ENCODE measurements at regions of chr6 and their contacts with region 1.

Region 1: DNA sequence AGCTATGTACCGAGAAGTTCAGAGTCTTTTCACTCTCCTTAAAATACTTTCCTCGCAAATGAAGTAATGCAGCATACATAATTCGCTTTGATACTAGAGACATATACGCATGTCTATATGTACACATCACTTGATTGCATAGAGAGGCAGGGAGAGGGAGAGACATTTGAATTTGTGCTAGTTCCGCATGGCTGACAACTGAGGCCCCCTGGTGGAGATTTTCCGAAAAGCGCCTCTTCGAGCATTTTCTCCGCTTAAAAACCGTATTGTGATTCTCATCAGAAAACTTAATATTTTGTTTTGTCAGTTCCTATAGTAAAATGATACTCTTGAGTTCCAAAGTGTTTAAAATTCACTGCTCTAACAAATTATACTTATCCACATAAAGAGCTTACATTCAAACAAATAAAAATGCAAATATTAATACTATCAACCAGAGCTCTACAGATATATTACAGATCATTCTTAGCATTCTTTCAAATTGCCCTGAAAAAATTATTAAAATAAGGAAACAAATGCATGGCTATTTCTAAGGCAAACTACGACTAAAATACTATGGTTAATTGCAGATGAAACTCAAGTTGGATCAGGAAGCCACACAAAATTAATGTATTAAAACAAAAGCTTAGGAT is 637 bp downstream of the MYLK4 start:
- DNase-seq: peak; percentile 72
- H3K4me3 Mint-ChIP-seq: no peak overlapping the region
- H3K27ac Mint-ChIP-seq: no peak overlapping the region
- H3K4me1 Mint-ChIP-seq: peaks cover 8% of the 10 kb centered on the region
- H3K27me3 Mint-ChIP-seq: peaks cover 41% of the 10 kb centered on the region

Region 2: GRCh38 chr6:1596088-1596852 is 1153.8 kb before region 1 on chr6:
- CTCF ChIA-PET with region 1: interaction called, 13 read pairs
- POLR2A ChIA-PET with region 1: no interaction called
- DNase-seq: peak; percentile 66
- H3K4me3 Mint-ChIP-seq: no peak overlapping the region
- H3K27ac Mint-ChIP-seq: no peak overlapping the region
- H3K4me1 Mint-ChIP-seq: peaks cover 3% of the 10 kb centered on the region
- H3K27me3 Mint-ChIP-seq: peaks cover 62% of the 10 kb centered on the region

Region 3: GRCh38 chr6:2733324-2733723 is 16.8 kb before region 1 on chr6:
- CTCF ChIA-PET with region 1: interaction called, 86 read pairs
- POLR2A ChIA-PET with region 1: interaction called, 4 read pairs
- DNase-seq: peak; percentile 59
- H3K4me3 Mint-ChIP-seq: no peak overlapping the region
- H3K27ac Mint-ChIP-seq: no peak overlapping the region
- H3K4me1 Mint-ChIP-seq: peaks cover 6% of the 10 kb centered on the region
- H3K27me3 Mint-ChIP-seq: peaks cover 5% of the 10 kb centered on the region

Region 4: DNA sequence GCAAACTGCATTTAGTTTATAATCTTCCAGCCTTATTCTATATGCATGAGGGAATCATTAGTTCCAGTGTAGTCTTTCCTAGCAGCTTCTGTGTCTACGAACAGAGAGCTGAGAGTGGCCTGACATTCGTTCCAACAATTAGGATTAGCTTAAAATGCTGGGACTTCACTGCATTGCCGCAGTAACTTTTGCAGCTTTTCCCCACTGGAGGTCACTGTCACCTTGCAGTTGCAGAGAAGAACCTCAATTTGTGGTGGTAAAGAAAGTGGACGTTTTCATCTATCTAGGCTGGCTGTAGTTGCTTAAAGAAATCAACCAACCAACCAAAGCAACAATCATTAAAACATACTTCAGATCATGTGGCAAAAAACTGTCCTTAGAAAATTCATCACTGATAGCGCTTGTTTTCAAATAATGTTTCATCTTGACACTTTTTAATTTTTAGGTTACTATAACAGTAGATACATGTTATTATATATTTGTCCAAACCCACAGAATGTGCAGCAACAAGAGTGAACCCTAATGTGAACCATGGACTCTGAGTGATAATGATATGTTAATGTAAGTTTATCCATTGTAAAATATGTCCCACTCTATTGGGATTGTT is 11.6 kb before region 1 on chr6:
- CTCF ChIA-PET with region 1: interaction called, 86 read pairs
- POLR2A ChIA-PET with region 1: interaction called, 4 read pairs
- DNase-seq: peak; percentile 53
- H3K4me3 Mint-ChIP-seq: no peak overlapping the region
- H3K27ac Mint-ChIP-seq: no peak overlapping the region
- H3K4me1 Mint-ChIP-seq: no peaks in the 10 kb centered on the region
- H3K27me3 Mint-ChIP-seq: peaks cover 5% of the 10 kb centered on the region

Region 5: GRCh38 chr6:2765166-2765895 is 15.2 kb after region 1 on chr6 and contains the start of gene WRNIP1:
- CTCF ChIA-PET with region 1: interaction called, 29 read pairs
- POLR2A ChIA-PET with region 1: interaction called, 4 read pairs
- DNase-seq: peak; percentile 98
- H3K4me3 Mint-ChIP-seq: peak within 1 kb of the TSS; percentile 90
- H3K27ac Mint-ChIP-seq: peak within 1 kb of the TSS; percentile 96
- H3K4me1 Mint-ChIP-seq: peaks cover 50% of the 10 kb centered on the region
- H3K27me3 Mint-ChIP-seq: no peaks in the 10 kb centered on the region
- total RNA-seq, gene WRNIP1: 39.6 to 42.1 TPM

Region 6: DNA sequence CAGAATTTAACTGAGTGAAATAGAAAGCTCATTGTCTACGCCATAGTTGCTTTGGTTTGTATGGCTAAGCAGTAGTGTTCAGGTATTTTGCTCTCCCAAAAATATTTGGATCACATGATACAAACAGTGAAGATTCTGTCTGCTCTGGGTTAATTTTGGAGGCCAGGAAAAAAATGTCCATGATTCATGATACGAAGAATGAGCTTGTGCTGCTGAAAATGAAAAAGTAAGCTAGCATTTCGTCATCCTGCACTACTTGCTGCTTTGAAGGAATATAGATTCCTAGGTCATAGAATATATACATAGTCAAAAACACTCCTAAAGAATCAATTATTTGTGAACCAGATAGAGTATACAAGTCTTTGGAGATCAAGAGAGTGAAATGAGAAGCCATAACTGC is 23.4 kb after region 1 on chr6:
- CTCF ChIA-PET with region 1: interaction called, 29 read pairs
- POLR2A ChIA-PET with region 1: no interaction called
- DNase-seq: no peak
- H3K4me3 Mint-ChIP-seq: no peak overlapping the region
- H3K27ac Mint-ChIP-seq: no peak overlapping the region
- H3K4me1 Mint-ChIP-seq: peaks cover 26% of the 10 kb centered on the region
- H3K27me3 Mint-ChIP-seq: no peaks in the 10 kb centered on the region

Measured in activated CD4-positive, alpha-beta memory T cell treated with anti-CD3 and anti-CD28 coated beads, Interleukin-2, amount 10 ng/mL, durations not matched to agents 7 days and 5 days (primary cell).